ENCODE measurements at regions of chr6 and their contacts with region 1.

Region 1: DNA sequence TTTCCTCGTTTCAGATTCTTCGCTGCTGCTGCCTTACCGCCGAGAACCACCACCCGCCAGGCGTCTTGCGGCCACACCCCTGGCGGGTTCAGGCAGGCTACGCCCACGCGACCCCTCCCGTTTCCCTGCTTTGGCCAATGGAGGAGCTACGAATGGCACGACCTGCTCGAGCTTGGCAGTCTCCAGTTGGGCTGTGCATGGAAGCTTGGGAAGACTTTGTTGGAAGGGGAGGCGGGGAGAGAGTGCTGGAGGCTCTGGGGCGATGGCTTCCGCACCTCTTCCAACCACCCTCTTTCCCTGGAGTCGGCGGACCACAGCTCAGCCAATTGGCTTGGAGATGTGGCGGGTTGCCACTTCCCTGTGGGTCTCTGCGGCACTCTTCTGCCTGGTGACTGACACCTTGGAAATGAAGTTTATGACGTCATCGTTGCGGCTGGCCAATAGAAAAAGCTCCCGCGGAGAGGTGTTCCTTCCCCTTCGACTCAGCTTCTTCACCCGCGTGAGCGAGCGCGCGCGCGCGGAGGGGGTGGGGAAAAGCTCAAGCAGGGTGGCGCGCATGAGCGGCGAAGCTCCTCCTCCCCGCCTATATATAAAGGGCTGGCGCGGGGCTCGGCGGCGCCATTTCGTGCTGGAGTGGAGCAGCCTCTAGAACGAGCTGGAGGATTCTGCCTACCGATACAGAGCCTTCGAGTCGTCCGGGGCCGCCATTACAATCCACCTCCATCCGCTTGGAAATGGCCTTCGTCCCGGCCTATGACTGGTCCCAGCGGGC is 3.4 kb downstream of the BRD2 start:
- H3K4me3 ChIP-seq: peak overlapping the region; percentile 97
- H3K27ac ChIP-seq: peak overlapping the region; percentile 99
- H3K4me1 ChIP-seq: peaks cover 20% of the 10 kb centered on the region
- CTCF ChIP-seq: no peak; the same call in 1 of the 2 replicates

Region 2: DNA sequence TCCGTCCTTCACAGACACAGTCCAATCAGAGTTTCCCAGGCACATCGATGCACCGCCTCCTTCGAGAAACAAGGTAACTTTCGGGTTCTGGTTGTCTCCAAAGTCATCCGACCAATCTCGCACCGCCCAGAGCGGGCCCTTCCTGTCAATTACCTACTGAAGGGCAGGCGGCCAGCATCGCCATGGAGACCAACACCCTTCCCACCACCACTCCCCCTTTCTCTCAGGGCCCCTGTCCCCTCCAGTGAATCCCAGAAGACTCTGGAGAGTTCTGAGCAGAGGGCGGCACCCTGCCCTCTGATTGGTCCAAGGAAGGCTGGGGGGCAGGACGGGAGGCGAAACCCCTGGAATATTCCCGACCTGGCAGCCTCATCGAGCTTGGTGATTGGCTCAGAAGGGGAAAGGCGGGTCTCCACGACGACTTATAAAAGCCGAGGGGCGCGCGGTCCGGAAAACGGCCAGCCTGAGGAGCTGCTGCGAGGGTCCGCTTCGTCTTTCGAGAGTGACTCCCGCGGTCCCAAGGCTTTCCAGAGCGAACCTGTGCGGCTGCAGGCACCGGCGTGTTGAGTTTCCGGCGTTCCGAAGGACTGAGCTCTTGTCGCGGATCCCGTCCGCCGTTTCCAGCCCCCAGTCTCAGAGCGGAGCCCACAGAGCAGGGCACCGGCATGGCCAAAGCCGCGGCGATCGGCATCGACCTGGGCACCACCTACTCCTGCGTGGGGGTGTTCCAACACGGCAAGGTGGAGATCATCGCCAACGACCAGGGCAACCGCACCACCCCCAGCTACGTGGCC is 1144.3 kb before region 1 on chr6 and contains the start of gene HSPA1B:
- CTCF ChIA-PET with region 1: no interaction called
- POLR2A ChIA-PET with region 1: interaction called, 16 read pairs
- H3K4me3 ChIP-seq: peak within 1 kb of the TSS; percentile 65
- H3K27ac ChIP-seq: peak within 1 kb of the TSS; percentile 69
- H3K4me1 ChIP-seq: no peaks in the 10 kb centered on the region
- CTCF ChIP-seq: peak; percentile 35; the same call in 1 of the 2 replicates

Region 3: GRCh38 chr6:32224696-32225095 is 747.1 kb before region 1 on chr6:
- CTCF ChIA-PET with region 1: no interaction called
- POLR2A ChIA-PET with region 1: no interaction called
- H3K4me3 ChIP-seq: no peak overlapping the region
- H3K27ac ChIP-seq: no peak overlapping the region
- H3K4me1 ChIP-seq: no peaks in the 10 kb centered on the region
- CTCF ChIP-seq: no peak

Region 4: GRCh38 chr6:32838114-32838958 is 133.4 kb before region 1 on chr6 and contains the start of gene TAP2:
- CTCF ChIA-PET with region 1: interaction called, 27 read pairs
- POLR2A ChIA-PET with region 1: interaction called, 83 read pairs
- H3K4me3 ChIP-seq: peak within 1 kb of the TSS; percentile 87
- H3K27ac ChIP-seq: peak within 1 kb of the TSS; percentile 67
- H3K4me1 ChIP-seq: 0 out of 2 replicates have a peak, but pooled peaks cover 3% of the 10 kb centered on the region
- CTCF ChIP-seq: peak; percentile 96

Region 5: GRCh38 chr6:32894080-32895005 is 77.4 kb before region 1 on chr6:
- CTCF ChIA-PET with region 1: interaction called, 8 read pairs
- POLR2A ChIA-PET with region 1: interaction called, 266 read pairs
- H3K4me3 ChIP-seq: peak overlapping the region; percentile 66
- H3K27ac ChIP-seq: peak overlapping the region; percentile 96
- H3K4me1 ChIP-seq: peaks cover 5% of the 10 kb centered on the region
- CTCF ChIP-seq: peak; percentile 52; the same call in 1 of the 2 replicates

Region 6: GRCh38 chr6:32952817-32953739 is 18.7 kb before region 1 on chr6 and contains the start of gene HLA-DMA:
- CTCF ChIA-PET with region 1: interaction called, 344 read pairs
- POLR2A ChIA-PET with region 1: interaction called, 264 read pairs
- H3K4me3 ChIP-seq: no peak within 1 kb of the TSS
- H3K27ac ChIP-seq: no peak within 1 kb of the TSS
- H3K4me1 ChIP-seq: no peaks in the 10 kb centered on the region
- CTCF ChIP-seq: 0 out of 2 replicates have a peak, but pooled peaks have one; percentile 31

Region 7: DNA sequence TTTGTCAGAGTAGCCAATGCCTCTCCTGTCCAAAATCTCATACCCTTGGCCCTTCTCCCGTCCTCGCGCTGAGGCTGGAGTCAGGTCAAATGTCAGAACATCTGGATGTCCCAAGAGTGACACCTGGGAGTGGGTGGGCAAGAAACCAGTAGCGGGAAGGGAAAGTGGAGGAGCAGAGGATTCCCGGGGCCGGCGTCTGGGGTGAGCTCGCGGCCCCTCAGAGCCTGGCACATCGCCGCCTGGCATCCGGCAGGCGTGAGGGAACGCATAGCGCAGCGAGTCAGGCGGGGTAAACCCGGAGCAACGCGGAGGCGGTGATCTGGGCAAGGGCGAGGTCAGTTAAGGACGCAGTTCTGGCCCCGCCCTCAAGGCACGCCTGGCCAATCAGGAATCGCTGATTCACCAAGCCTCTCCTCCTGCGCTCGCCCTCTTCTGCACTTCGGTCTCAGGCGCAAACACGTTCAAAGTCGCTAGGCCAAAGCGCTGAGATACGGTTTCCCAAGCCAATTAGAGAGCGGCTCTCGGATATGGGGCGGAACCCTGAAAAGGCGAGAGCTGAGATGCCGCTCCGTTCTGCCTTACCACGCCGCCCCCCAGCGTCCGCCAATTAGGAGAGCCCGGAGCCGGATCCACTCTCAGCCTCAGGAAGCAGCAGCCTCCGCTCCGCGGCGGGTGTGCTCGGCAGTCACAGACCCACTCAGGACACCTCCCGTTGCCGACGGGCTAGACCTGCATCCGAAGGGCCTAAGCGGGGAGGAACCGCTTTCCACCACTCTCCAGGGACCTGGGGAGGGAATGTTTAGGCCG is 277.4 kb after region 1 on chr6:
- CTCF ChIA-PET with region 1: no interaction called
- POLR2A ChIA-PET with region 1: interaction called, 32 read pairs
- H3K4me3 ChIP-seq: peak overlapping the region; percentile 62
- H3K27ac ChIP-seq: peak overlapping the region; percentile 88
- H3K4me1 ChIP-seq: peaks cover 12% of the 10 kb centered on the region
- CTCF ChIP-seq: 0 out of 2 replicates have a peak, but pooled peaks have one; percentile 35